Left cardiac atrium (tissue), 4 donors: ENCODE measurements at regions of chr9 and their contacts with region 1.

Region 1: DNA sequence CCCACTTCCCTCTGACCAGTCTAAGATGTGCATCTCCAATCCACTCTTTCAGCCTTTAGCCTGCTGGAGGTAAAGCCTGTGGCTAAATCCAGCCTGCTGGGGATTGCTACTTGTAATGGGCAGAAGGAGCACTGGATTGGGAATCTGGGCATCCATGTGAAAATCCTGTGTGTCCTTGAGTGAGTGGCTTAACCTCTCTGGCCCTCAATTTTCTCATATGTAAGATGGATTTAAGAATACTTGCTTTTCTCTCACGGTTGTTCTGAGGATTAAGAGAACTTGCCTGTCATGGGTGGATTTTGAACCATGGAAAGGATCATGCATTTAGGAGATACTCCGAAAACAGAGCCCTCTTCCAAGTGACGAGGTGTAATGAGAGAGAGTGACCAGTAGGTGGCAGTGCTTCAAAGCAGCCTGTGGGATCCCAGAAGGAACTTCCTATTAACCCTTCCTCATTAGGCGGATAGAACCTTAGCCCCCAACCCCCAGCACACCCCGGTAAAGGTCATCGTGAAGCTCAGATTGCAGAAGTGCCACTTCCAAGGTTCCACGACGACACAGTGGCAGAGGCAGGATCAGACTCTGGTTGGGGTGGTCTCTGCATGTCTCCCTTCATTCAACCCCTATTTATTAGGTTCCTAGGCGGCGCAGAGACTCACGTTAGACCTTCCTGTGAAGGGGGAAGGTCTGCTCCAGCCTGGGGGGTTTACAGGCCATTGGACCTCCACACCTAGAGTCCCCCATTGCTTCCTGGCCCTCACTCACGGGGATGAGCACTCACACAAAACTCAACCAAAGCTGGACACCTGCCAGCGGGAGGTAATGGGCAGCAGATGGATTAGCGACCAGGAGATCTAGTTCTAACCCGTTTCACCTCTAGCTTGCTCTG is 68.7 kb upstream of the ZNF618 start:
- DNase-seq: peak; percentile 33
- ATAC-seq: peak; percentile 72 to 80

Region 2: GRCh38 chr9:113687680-113688371 is 119.6 kb before region 1 on chr9:
- intact Hi-C with region 1: no loop called
- DNase-seq: no peak
- ATAC-seq: peak; percentile 42 to 54

Region 3: GRCh38 chr9:113738893-113739604 is 68.4 kb before region 1 on chr9:
- intact Hi-C with region 1: no loop called
- DNase-seq: no peak
- ATAC-seq: no peak

Region 4: DNA sequence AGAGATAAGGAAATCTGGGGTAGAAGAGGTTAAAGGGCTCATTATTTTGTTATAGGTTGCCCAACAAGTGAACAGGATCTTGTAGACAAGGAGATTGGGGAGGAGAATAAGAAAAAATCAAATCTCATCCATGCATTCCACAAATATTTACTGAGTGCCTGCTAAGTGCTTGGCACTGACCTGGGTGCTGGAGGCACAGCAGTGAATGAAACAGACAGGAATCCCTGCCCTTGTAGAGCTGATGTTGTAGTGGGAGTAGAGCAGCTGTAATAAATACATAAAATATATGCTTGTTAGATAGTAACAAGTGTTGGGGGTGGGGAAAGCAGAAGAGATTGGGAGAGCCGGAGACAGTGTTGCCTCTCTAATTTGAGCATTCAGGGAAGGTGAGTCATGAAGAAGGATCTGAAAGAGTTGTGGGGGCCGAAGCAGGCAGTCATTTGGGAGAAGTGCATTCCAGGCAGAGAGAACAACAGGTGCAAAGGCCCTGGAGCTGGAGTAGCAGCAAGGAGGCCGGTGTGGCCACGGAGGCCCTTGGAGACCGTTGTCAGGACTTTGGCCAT is 166.5 kb after region 1 on chr9:
- intact Hi-C with region 1: loop called in 1 of 2 experiments (anchors 10 kb)
- DNase-seq: no peak
- ATAC-seq: peak; percentile 24 to 86

Region 5: DNA sequence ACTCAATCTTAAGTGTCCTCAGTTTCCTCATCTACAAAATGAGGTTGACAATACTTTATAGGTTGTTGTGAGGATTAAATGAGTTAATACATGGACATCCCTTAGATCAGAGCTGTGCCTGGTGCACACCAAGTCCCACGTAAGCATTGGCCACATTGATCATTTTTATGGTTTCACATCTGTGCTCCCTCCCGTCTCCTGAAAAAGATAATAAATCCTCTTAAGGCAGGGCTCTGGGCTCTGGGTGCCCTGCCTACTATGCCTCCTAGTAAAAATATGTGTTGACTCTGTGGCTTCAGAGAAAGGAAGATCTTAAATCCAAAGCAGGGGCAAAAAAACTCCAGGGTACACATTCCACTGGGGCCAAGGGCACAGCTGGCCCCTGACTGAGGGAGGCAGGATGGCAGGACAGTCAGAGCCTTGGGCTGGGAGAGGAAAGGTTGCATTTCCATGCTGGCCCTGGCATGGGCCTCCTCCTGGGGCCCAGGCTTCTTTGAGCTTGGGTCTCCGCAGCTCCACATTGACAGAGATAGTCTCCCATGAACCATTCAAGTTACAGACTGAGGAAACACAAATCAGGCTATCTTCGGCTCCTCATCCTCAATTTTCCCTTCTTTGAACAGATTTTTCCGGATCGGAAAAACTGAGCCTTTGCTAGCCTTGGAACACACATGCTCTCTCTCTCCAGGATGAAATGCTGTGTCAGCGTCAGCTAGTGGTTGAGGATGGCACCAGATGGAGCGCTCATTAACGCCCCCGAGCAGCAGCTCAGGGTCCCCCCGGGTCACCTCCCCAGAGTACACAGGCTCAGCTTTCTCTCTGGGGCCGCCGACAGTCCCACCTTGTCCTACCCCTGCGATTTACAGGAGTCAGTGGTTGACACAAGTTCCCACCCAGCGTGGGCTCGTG is 314.1 kb after region 1 on chr9:
- intact Hi-C with region 1: no loop called
- DNase-seq: no peak
- ATAC-seq: no peak